ENCODE measurements at regions of chr2 and their contacts with region 1.

Region 1: GRCh38 chr2:152566728-152567069 is 150.6 kb downstream of the PRPF40A start:
- DNase-seq: no peak
- ATAC-seq: peak; percentile 20; the same call in 1 of the 3 replicates
- H3K4me3 ChIP-seq: no peak overlapping the region
- H3K27ac ChIP-seq: no peak overlapping the region
- H3K4me1 ChIP-seq: no peaks in the 10 kb centered on the region
- H3K27me3 ChIP-seq: peaks cover 3 to 4% of the 10 kb centered on the region in 2 experiments; a peak in 2 of 5 replicates
- CTCF ChIP-seq: no peak
- EP300 ChIP-seq: no peak
- POLR2A ChIP-seq: no peak
- RAD21 ChIP-seq: no peak

Region 2: DNA sequence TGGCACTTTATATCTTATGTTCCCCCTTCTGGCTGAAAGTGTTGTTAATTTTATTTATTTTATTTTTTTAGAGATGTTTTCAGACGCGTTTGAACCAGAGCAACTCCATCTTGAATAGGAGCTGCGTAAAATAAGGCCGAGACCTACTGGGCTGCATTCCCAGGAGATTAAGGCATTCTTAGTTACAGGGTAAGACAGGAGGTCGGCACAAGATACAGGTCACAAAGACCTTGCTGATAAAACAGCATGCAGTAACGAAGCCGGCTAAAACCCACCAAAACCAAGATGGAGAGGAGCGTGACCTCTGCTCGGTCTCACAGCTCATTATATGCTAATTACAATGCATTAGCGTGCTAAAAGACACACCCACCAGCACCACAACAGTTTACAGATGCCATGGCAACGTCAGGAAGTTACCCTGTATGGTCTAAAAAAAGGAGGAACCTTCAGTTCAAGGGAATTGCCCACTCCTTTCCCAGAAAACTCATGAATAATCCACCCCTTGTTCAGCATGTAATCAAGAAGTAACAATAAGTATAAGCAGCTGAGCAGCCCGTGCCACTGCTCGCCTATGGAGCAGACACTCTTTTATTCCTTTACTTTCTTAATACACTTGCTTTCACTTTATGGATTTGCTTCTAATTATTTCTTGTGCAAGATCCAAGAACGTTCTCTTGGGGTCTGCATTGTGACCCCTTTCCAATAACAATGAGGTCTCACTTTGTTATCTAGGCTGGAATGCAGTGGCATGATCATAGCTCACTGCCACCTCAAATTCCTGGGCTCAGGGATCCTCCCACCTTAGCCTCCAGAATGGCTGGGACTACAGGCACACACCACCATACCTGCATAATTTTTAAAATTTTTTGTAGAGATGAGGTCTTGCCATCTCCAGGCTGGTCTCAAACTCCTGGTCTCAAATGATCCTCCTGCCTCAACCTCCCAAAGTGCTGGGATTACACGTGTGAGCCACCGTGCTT is 523.8 kb before region 1 on chr2:
- CTCF ChIA-PET with region 1: no interaction called
- POLR2A ChIA-PET with region 1: no interaction called
- in situ Hi-C with region 1: no loop called
- intact Hi-C with region 1: loop called (anchors 5 kb)
- DNase-seq: peak in 1 of 4 experiments; percentile 21
- ATAC-seq: peak; percentile 57
- H3K4me3 ChIP-seq: no peak overlapping the region
- H3K27ac ChIP-seq: no peak overlapping the region
- H3K4me1 ChIP-seq: no peaks in the 10 kb centered on the region; a peak in 1 of 5 replicates
- H3K27me3 ChIP-seq: peaks cover 10 to 13% of the 10 kb centered on the region in 2 experiments; a peak in 3 of 5 replicates
- CTCF ChIP-seq: no peak
- EP300 ChIP-seq: no peak
- POLR2A ChIP-seq: no peak
- RAD21 ChIP-seq: no peak

Region 3: DNA sequence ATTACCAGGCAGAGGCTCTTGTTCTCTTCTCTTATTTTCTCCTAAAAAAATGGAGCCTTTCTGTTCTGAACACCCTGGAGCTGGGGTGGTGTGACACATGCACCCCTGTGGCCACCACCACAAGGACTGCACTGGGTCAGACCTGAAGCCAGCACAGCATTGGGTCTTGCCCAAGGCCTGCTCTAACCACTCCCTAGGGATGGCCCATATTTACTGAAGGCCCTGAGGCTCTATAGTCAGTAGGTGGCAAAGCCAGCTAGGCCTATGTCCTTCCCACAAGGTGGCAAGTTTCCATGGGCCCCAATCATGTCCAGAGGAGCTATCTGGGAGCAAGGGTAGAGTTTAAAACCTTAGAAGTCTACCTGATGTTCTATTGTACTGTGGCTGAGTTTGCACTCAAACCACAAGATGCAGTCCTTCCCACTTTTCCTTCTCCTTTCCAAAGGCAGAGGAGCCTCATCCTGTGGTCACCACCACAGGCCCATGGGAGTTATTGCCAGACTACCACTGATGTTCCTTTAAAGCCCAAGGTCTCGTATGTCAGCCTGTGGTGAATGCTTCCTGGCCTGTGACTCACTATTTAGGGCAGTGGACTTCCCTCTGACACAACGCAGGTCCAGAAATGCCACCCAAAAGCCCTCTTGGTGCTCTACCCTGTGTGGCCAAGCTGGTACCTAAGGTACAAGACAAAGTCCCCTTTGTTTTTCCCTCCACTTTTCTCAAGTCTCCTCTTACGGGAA is 246.7 kb before region 1 on chr2:
- CTCF ChIA-PET with region 1: no interaction called
- POLR2A ChIA-PET with region 1: no interaction called
- in situ Hi-C with region 1: no loop called
- intact Hi-C with region 1: no loop called
- DNase-seq: no peak
- ATAC-seq: no peak
- H3K4me3 ChIP-seq: no peak overlapping the region
- H3K27ac ChIP-seq: no peak overlapping the region
- H3K4me1 ChIP-seq: no peaks in the 10 kb centered on the region
- H3K27me3 ChIP-seq: no peaks in the 10 kb centered on the region
- CTCF ChIP-seq: no peak
- EP300 ChIP-seq: no peak
- POLR2A ChIP-seq: no peak
- RAD21 ChIP-seq: no peak

Region 4: GRCh38 chr2:152534460-152535135 is 32.1 kb before region 1 on chr2:
- CTCF ChIA-PET with region 1: no interaction called
- POLR2A ChIA-PET with region 1: no interaction called
- in situ Hi-C with region 1: no loop called
- intact Hi-C with region 1: no loop called
- DNase-seq: no peak
- ATAC-seq: no peak
- H3K4me3 ChIP-seq: no peak overlapping the region
- H3K27ac ChIP-seq: no peak overlapping the region
- H3K4me1 ChIP-seq: no peaks in the 10 kb centered on the region
- H3K27me3 ChIP-seq: peaks cover 0 to 6% of the 10 kb centered on the region in 2 experiments; a peak in 3 of 5 replicates
- CTCF ChIP-seq: no peak
- EP300 ChIP-seq: no peak
- POLR2A ChIP-seq: no peak
- RAD21 ChIP-seq: no peak

Region 5: GRCh38 chr2:152611458-152612231 is 44.9 kb after region 1 on chr2:
- CTCF ChIA-PET with region 1: no interaction called
- POLR2A ChIA-PET with region 1: no interaction called
- in situ Hi-C with region 1: no loop called
- intact Hi-C with region 1: no loop called
- DNase-seq: no peak
- ATAC-seq: peak; percentile 47; the same call in 2 of the 3 replicates
- H3K4me3 ChIP-seq: no peak overlapping the region
- H3K27ac ChIP-seq: no peak overlapping the region
- H3K4me1 ChIP-seq: no peaks in the 10 kb centered on the region
- H3K27me3 ChIP-seq: peaks cover 13 to 14% of the 10 kb centered on the region in 2 experiments; a peak in 4 of 5 replicates
- CTCF ChIP-seq: no peak
- EP300 ChIP-seq: no peak
- POLR2A ChIP-seq: no peak
- RAD21 ChIP-seq: no peak

Region 6: DNA sequence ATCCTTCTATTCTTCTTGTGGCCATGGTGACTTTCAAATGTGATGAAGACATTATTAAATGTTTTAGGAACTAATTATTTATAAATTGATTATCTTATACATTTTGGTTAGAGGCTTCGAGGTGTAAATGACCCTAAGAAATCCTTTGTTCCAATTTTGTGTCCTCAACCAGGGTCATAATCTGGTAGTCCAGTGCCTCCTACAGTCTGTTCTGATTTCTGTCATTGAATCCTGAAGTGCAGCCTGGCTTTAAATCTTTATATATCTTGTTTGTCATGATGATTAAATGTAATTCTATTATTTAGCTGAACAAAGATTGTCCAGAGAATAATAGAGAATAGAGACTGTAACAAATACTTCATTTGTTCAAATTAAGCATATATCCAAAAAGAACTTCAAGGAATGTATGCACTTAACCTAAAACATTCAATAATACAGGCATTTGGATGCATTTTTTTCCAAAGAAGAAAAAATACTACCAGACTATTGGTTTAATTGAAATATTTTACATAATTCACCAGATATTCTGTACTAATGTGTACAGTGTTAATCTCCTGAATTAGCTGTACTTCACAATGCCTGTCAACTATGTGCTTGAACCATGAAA is 60.8 kb after region 1 on chr2:
- CTCF ChIA-PET with region 1: no interaction called
- POLR2A ChIA-PET with region 1: no interaction called
- in situ Hi-C with region 1: no loop called
- intact Hi-C with region 1: loop called (anchors 5 kb)
- DNase-seq: peak in 3 of 4 experiments; percentile 30 to 38 (median 33)
- ATAC-seq: peak; percentile 83
- H3K4me3 ChIP-seq: no peak overlapping the region
- H3K27ac ChIP-seq: no peak overlapping the region
- H3K4me1 ChIP-seq: no peaks in the 10 kb centered on the region; a peak in 1 of 5 replicates
- H3K27me3 ChIP-seq: peaks cover 9 to 11% of the 10 kb centered on the region in 2 experiments; a peak in 4 of 5 replicates
- CTCF ChIP-seq: peak; percentile 43 to 73 (median 57); a peak in 4 of 6 replicates
- EP300 ChIP-seq: no peak
- POLR2A ChIP-seq: no peak
- RAD21 ChIP-seq: peak; percentile 86 to 91

Region 7: DNA sequence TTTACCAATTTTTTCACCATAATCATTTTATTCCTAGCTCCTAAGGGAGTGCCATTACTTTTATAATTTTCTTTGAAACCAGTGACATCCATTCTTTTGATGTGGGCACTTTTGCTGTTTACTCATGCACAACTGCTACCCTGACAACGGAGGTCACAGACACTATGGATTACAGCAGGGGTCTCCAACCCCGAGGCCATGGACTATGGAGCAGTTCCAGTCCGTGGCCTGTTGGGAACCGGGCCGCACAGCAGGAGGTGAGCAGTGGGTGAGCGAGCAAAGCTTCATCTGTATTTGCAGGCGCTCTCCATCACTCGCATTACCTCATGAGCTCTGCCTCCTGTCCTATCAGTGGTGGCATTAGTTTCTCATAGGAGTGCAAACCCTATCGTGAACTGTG is 116.0 kb after region 1 on chr2:
- CTCF ChIA-PET with region 1: no interaction called
- POLR2A ChIA-PET with region 1: no interaction called
- in situ Hi-C with region 1: no loop called
- intact Hi-C with region 1: no loop called
- DNase-seq: no peak
- ATAC-seq: no peak
- H3K4me3 ChIP-seq: no peak overlapping the region
- H3K27ac ChIP-seq: no peak overlapping the region
- H3K4me1 ChIP-seq: no peaks in the 10 kb centered on the region
- H3K27me3 ChIP-seq: no peaks in the 10 kb centered on the region
- CTCF ChIP-seq: no peak
- EP300 ChIP-seq: no peak
- POLR2A ChIP-seq: no peak
- RAD21 ChIP-seq: no peak

Measured in K562 (cell line).